ENCODE measurements at regions of chr19 and their contacts with region 1.

Region 1: DNA sequence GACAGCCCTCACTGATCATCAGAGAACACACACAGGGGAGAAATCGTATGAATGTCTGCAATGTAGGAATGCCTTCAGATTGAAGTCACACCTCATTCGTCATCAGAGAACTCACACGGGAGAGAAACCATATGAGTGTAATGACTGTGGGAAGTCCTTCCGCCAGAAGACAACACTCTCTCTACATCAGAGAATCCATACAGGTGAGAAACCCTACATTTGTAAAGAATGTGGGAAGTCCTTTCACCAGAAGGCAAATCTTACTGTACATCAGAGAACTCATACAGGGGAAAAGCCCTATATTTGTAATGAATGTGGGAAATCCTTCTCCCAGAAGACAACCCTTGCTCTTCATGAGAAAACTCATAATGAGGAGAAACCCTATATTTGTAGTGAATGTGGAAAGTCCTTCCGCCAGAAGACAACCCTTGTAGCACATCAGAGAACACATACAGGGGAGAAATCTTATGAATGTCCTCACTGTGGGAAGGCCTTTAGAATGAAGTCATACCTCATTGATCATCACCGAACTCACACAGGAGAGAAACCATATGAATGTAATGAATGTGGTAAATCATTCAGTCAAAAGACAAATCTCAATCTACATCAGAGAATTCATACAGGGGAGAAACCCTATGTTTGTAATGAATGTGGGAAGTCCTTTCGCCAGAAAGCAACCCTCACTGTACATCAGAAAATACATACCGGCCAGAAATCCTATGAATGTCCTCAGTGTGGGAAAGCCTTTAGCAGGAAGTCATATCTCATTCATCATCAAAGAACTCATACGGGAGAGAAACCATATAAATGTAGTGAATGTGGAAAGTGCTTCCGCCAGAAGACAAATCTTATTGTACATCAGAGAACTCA is 32.5 kb downstream of the ZNF567 start:
- DNase-seq: no peak
- ATAC-seq: no peak

Region 2: DNA sequence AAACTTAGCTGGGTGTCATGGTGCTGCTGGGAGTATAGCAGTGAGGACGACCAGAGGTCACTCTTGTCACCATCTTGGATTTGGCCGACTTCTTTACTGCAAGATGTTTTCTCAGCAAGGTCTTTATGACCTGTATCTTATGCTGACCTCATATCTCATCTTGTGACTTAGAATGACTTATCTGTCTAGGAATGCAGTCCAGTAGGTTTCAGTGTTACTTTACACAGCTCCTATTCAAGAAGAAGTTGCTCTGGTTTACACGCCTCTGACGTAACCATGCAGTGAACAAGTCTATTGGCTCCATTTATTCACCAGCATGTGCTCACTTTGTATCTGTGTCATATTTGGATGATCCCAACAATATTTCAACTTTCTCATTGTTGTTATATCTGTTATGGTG is 25.9 kb after region 1 on chr19:
- intact Hi-C with region 1: no loop called
- DNase-seq: no peak
- ATAC-seq: no peak

Region 3: DNA sequence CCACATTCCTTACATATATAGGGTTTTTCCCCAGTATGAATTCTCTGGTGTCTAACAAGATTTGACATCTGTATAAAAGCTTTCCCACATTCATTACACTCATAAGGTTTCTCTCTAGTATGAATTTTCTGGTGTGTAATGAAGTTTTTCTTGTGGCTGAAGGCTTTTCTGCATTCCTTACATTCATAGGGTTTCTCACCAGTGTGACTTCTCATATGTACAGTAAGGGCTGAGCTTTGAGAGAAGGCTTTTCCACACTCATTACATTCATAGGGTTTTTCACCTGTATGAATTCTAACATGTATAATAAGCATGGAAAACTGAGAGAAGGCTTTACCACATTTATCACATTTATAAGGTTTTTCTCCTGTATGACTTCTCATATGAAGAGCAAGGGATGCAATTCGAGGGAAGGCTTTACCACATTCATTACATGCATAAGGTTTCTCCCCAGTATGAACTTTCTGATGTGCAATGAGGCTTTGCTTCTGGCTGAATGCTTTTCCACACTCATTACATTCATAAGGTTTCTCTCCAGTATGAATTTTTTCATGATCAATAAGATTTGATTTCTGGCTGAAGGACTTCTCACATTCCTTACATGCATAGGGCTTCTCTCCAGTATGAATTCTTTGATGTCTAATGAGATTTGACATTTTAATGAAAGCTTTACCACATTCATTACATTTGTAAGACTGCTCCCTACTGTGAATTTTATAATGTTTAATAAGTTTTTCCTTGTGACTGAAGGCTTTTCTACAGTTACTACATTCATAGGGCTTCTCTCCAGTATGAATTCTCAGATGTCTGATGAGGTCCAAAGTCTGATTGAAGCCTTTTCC is 693.5 kb after region 1 on chr19:
- intact Hi-C with region 1: loop called (anchors 5 kb)
- DNase-seq: no peak
- ATAC-seq: no peak